CD8-positive, alpha-beta memory T cell (primary cell): ENCODE measurements at regions of chr15 and their contacts with region 1.

Region 1: GRCh38 chr15:49235446-49236124 is 65.5 kb downstream of the GALK2 start:
- DNase-seq: peak; percentile 11 to 51 (median 29)
- H3K4me3 ChIP-seq: no peak overlapping the region
- H3K4me3 Mint-ChIP-seq: no peak overlapping the region
- H3K27ac ChIP-seq: no peak overlapping the region
- H3K27ac Mint-ChIP-seq: peak overlapping the region in 6 of 8 donors; percentile 29 to 79 (median 72)
- H3K4me1 ChIP-seq: no peaks in the 10 kb centered on the region
- H3K4me1 Mint-ChIP-seq: peaks cover 14 to 15% (median 15%) of the 10 kb centered on the region in 3 donors
- H3K27me3 ChIP-seq: no peaks in the 10 kb centered on the region
- H3K27me3 Mint-ChIP-seq: no peaks in the 10 kb centered on the region

Region 2: GRCh38 chr15:49421991-49422390 is 186.4 kb after region 1 on chr15:
- CTCF ChIA-PET with region 1: interaction called, 22 read pairs
- POLR2A ChIA-PET with region 1: no interaction called
- DNase-seq: peak in 3 of 5 donors; percentile 43 to 52 (median 43)
- H3K4me3 ChIP-seq: no peak overlapping the region
- H3K4me3 Mint-ChIP-seq: peak overlapping the region in 5 of 7 donors; percentile 2 to 80 (median 53)
- H3K27ac ChIP-seq: no peak overlapping the region
- H3K27ac Mint-ChIP-seq: peak overlapping the region in 4 of 8 donors; percentile 0 to 84 (median 4)
- H3K4me1 ChIP-seq: no peaks in the 10 kb centered on the region
- H3K4me1 Mint-ChIP-seq: peaks cover 0 to 8% (median 5%) of the 10 kb centered on the region in 3 donors
- H3K27me3 ChIP-seq: no peaks in the 10 kb centered on the region
- H3K27me3 Mint-ChIP-seq: peaks cover 0 to 5% of the 10 kb centered on the region in 2 donors